ENCODE measurements at regions of chr14 and their contacts with region 1.

Region 1: DNA sequence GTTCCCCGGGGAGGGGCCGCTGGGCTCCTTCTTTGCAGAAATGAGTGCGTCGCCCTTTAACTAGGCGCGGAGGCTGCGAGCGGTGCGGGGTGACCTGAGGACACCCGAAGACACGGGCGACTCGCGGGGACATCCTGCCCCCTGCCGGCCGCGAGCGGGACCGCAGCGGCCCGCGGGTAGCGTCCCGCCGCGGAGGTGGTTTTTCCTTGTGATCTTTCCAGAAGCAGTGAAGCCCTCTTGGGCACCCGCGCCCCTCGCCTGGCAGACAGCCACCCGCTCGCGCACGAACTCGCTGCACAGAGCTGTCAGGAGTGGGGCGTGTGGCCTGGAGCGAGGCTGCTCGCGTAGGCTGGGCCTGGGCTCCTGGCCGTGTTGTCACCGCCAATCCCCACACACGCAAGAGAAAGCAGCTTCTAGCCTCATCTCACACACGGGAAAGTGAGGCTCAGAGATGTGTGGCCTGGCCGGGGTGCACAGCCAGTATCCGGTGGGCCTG is 67.2 kb downstream of the DIO3 start:
- DNase-seq: peak; percentile 58 to 94
- H3K4me3 ChIP-seq: no peak overlapping the region
- CTCF ChIP-seq: peak in 1 of 3 donors; percentile 85
- POLR2A ChIP-seq: no peak

Region 2: GRCh38 chr14:100383727-100384158 is 1244.8 kb before region 1 on chr14:
- intact Hi-C with region 1: loop called (anchors 2 kb)
- DNase-seq: peak; percentile 43 to 90
- H3K4me3 ChIP-seq: no peak overlapping the region
- CTCF ChIP-seq: peak in 1 of 3 donors; percentile 47
- POLR2A ChIP-seq: no peak

Region 3: GRCh38 chr14:100581228-100582145 is 1047.0 kb before region 1 on chr14:
- intact Hi-C with region 1: no loop called
- DNase-seq: peak in 1 of 2 donors; percentile 79
- H3K4me3 ChIP-seq: no peak overlapping the region
- CTCF ChIP-seq: no peak
- POLR2A ChIP-seq: no peak

Region 4: GRCh38 chr14:100662879-100663760 is 965.4 kb before region 1 on chr14:
- intact Hi-C with region 1: loop called (anchors 10 kb)
- DNase-seq: peak; percentile 36 to 92
- H3K4me3 ChIP-seq: no peak overlapping the region
- CTCF ChIP-seq: peak in 1 of 3 donors; percentile 86
- POLR2A ChIP-seq: no peak

Region 5: DNA sequence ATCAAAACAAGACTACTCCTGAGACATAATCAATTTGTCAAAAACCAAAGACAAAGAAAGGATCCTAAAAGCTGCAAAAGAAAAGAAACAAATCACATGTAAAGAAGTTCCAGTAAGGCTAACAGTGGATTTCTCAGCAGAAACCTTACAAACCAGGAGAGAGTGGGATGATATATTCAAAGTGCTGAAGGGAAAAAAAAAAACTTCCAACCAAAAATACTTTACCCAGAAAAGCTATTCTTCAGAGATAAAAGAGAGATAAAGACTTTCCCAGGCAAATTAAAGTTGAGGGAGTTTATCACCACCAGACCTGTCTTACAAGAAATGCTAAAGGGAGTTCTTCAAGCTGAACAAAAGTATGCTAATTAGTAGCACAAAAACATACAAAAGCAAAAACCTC is 41.1 kb after region 1 on chr14:
- intact Hi-C with region 1: no loop called
- DNase-seq: no peak
- H3K4me3 ChIP-seq: no peak overlapping the region
- CTCF ChIP-seq: no peak
- POLR2A ChIP-seq: no peak